ENCODE measurements at regions of chr6 and their contacts with region 1.

Region 1: DNA sequence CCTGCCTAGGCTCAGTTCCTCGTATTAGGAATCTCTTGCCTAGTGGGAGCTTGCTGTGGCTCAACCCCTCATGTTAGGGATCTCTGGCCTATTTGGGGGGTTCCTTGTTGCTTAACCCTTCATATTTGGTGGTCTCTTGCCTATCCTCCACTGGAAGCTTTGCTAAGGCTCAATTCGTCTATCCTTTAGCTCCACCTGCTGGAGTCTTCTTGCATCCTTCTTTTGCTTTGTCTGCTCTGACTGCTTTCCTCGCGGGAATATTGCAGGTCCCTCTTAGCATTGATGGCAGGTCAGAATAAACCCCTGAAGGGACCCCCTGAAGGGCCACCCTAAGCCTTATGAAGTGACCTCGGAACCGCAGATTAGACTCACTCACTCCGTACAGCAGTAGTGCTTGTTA is 203.0 kb upstream of the TBX18 start:
- DNase-seq: peak; percentile 48
- ATAC-seq: peak; percentile 79
- H3K4me3 ChIP-seq: no peak overlapping the region
- H3K27ac ChIP-seq: no peak overlapping the region
- H3K4me1 ChIP-seq: no peaks in the 10 kb centered on the region
- H3K27me3 ChIP-seq: peaks cover 2% of the 10 kb centered on the region; the same call in 1 of the 2 replicates
- CTCF ChIP-seq: peak; percentile 60 to 70 (median 62)
- POLR2A ChIP-seq: no peak
- RAD21 ChIP-seq: peak; percentile 80

Region 2: DNA sequence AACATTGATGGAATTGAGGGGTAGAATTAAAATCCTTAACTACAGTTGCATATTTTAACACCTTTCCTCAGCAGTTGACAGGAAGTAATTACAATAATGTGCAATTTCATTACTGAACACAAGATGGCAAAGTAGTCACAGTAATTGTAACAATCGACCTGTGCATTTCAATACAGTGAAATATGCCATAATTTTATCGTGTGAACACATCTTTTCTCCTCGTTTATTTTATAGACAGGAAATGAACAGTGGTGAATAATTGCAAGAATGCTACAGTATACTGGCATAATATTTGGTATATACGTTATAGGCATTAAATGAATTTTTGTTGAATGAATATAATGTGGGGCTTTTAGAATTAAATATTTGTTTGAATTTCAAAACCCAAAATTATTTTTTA is 1082.9 kb before region 1 on chr6:
- CTCF ChIA-PET with region 1: no interaction called
- POLR2A ChIA-PET with region 1: no interaction called
- RAD21 ChIA-PET with region 1: no interaction called
- intact Hi-C with region 1: loop called (anchors 5 kb)
- DNase-seq: peak; percentile 42
- ATAC-seq: peak; percentile 76
- H3K4me3 ChIP-seq: no peak overlapping the region
- H3K27ac ChIP-seq: no peak overlapping the region
- H3K4me1 ChIP-seq: no peaks in the 10 kb centered on the region
- H3K27me3 ChIP-seq: no peaks in the 10 kb centered on the region
- CTCF ChIP-seq: peak; percentile 46 to 79 (median 72); a peak in 5 of 6 replicates
- POLR2A ChIP-seq: no peak
- RAD21 ChIP-seq: peak; percentile 89

Region 3: GRCh38 chr6:84227434-84228197 is 739.8 kb before region 1 on chr6 and contains the start of gene CEP162:
- CTCF ChIA-PET with region 1: interaction called, 4 read pairs
- POLR2A ChIA-PET with region 1: no interaction called
- RAD21 ChIA-PET with region 1: no interaction called
- intact Hi-C with region 1: loop called (anchors 2 kb)
- DNase-seq: peak; percentile 72
- ATAC-seq: peak; percentile 98
- H3K4me3 ChIP-seq: peak within 1 kb of the TSS; percentile 76 to 84
- H3K27ac ChIP-seq: peak within 1 kb of the TSS; percentile 55
- H3K4me1 ChIP-seq: peaks cover 3 to 22% of the 10 kb centered on the region in 2 experiments; a peak in 2 of 4 replicates
- H3K27me3 ChIP-seq: peaks cover 5% of the 10 kb centered on the region
- CTCF ChIP-seq: peak; percentile 20 to 75 (median 67); a peak in 5 of 6 replicates
- POLR2A ChIP-seq: no peak
- RAD21 ChIP-seq: peak; percentile 35; the same call in 1 of the 2 replicates
- total RNA-seq, gene CEP162: 5.5 TPM

Region 4: DNA sequence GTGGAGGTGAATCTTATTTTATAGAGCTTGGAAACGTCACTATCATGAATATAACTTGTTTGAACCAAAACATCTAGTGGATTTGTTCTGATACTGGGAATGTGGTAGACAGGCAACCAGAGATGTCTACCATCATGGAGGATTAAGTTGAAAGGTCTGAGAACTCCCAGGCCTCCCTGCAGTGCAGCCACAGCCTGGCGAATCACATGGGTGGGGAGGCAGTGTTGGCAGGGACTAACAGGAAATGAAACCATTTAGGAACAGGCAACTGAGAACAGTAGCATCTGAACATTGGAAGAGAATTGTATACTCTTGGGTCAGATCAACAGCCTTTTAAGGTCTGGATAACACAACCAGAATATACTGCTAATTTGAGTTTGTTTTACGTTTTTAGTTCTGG is 717.7 kb before region 1 on chr6:
- CTCF ChIA-PET with region 1: no interaction called
- POLR2A ChIA-PET with region 1: no interaction called
- RAD21 ChIA-PET with region 1: no interaction called
- intact Hi-C with region 1: loop called (anchors 10 kb)
- DNase-seq: no peak
- ATAC-seq: no peak
- H3K4me3 ChIP-seq: no peak overlapping the region
- H3K27ac ChIP-seq: no peak overlapping the region
- H3K4me1 ChIP-seq: peaks cover 0 to 5% of the 10 kb centered on the region in 2 experiments; a peak in 2 of 4 replicates
- H3K27me3 ChIP-seq: peaks cover 4% of the 10 kb centered on the region; the same call in 1 of the 2 replicates
- CTCF ChIP-seq: no peak
- POLR2A ChIP-seq: no peak
- RAD21 ChIP-seq: no peak

Region 5: DNA sequence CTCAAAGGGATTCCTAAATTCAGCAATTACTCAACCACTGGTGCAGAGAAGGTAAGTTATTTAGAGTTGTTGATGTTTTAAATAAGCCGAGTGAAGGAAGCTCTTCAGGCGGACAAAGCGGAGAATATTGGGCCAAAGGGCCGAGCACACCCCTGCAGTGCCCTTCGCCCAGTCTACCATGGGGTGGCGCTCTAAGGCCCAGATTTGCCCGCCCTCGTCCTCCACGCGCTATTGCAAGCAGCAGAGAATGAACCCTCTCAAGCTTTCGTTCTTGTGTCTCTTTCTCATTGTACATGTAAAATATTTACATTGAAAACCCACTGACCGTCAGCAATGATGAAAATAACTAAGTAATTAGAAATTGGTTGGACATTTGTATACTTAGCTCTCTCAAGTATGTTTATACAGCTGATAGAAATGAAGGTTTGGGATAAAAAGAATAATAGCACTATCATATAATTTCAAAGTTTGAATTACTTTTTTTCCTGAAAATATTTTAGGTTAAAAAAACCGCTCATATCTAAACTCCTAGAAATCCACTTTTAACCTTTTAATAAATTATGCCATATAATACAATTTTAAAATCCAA is 544.9 kb before region 1 on chr6:
- CTCF ChIA-PET with region 1: interaction called, 6 read pairs
- POLR2A ChIA-PET with region 1: no interaction called
- RAD21 ChIA-PET with region 1: interaction called in 1 of 2 experiments, 5 read pairs
- intact Hi-C with region 1: loop called (anchors 1 kb)
- DNase-seq: peak; percentile 31
- ATAC-seq: peak; percentile 99
- H3K4me3 ChIP-seq: peak overlapping the region in 1 of 2 experiments; percentile 20; a peak in 1 of 4 replicates
- H3K27ac ChIP-seq: no peak overlapping the region
- H3K4me1 ChIP-seq: 0 out of 4 replicates have a peak, but pooled peaks cover 0 to 3% of the 10 kb centered on the region in 2 experiments
- H3K27me3 ChIP-seq: 0 out of 2 replicates have a peak, but pooled peaks cover 8% of the 10 kb centered on the region
- CTCF ChIP-seq: peak; percentile 79 to 97 (median 93)
- POLR2A ChIP-seq: no peak
- RAD21 ChIP-seq: peak; percentile 84

Region 6: DNA sequence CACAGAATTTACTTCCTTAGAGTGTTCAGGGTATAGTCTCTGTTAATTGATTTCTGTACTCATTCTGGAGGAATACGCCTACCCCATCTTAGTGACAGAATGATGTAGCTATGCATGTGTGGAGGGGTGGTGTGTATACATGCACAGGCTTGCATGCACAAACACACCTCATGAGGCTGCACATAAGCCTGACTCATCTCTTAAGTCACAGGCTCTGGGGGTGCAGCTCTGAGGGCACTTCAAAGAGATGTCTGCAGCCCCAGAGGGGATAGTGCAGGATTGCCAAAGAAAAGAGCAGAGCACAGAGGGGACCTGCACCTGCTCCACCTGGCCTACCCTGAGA is 227.6 kb before region 1 on chr6:
- CTCF ChIA-PET with region 1: no interaction called
- POLR2A ChIA-PET with region 1: no interaction called
- RAD21 ChIA-PET with region 1: no interaction called
- intact Hi-C with region 1: no loop called
- DNase-seq: no peak
- ATAC-seq: no peak; the same call in 1 of the 2 replicates
- H3K4me3 ChIP-seq: no peak overlapping the region
- H3K27ac ChIP-seq: no peak overlapping the region
- H3K4me1 ChIP-seq: peaks cover 0 to 5% of the 10 kb centered on the region in 2 experiments; a peak in 1 of 4 replicates
- H3K27me3 ChIP-seq: 0 out of 2 replicates have a peak, but pooled peaks cover 4% of the 10 kb centered on the region
- CTCF ChIP-seq: no peak
- POLR2A ChIP-seq: no peak
- RAD21 ChIP-seq: no peak

Measured in HCT116 (cell line).